Motor neuron (in vitro differentiated cells): ENCODE measurements at regions of chr5 and their contacts with region 1.

Region 1: DNA sequence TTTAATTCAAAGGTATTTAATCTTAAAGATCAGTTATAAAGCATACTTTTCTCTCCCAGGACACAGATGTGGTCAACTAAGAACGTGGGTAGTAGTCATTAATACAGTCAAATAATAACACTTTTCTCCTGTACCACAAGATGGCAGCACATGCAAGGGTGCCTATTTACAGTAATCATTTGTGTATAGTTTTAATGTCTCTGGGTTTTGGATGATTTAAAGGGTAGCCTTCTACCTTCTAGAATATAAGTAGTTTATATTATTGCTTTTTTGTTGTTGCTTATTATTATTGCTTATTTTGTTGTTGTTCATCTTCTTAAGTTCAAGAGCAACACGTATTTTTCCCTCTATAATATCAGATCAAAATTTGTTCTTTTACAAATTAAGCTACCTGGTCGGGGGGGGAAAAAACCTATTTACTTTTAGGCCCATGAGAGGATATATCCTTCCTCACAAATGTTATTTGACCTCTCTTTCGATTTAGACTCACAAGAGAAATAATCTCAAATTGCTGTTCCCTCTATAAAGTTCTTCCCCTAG is 59.6 kb upstream of the SLC27A6 start:
- ATAC-seq: peak; percentile 53 to 91 (median 71)
- H3K4me3 ChIP-seq: no peak overlapping the region
- H3K27ac ChIP-seq: no peak overlapping the region
- H3K4me1 ChIP-seq: no peaks in the 10 kb centered on the region

Region 2: GRCh38 chr5:129053438-129053837 is 147.8 kb after region 1 on chr5:
- in situ Hi-C with region 1: loop called in 1 of 9 experiments (anchors 10 kb)
- ATAC-seq: no peak
- H3K4me3 ChIP-seq: no peak overlapping the region
- H3K27ac ChIP-seq: no peak overlapping the region
- H3K4me1 ChIP-seq: peaks cover 5 to 17% of the 10 kb centered on the region in 2 donors

Region 3: GRCh38 chr5:129767906-129768380 is 862.3 kb after region 1 on chr5:
- in situ Hi-C with region 1: loop called in 1 of 9 experiments (anchors 25 kb)
- ATAC-seq: peak; percentile 91 to 98 (median 95)
- H3K4me3 ChIP-seq: no peak overlapping the region
- H3K27ac ChIP-seq: no peak overlapping the region
- H3K4me1 ChIP-seq: no peaks in the 10 kb centered on the region

Region 4: DNA sequence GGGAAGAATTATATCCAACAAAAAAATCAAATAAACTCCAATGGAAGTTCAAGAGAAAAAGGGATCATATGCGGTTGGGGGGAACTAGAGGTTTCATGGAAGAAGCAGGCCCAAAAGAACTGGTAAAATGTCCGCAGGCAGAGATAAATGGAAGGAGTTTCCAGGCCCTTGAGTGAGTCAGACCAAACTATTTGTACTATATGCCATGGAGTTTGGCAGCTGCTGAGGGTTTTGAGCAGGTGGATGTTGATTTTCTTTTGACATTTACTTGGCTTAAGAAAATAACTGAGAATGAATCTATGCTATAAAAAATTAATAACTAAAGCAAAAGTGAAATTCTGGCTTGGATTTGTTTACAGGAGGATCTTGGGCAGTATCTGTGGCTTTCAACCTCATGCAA is 876.0 kb after region 1 on chr5:
- in situ Hi-C with region 1: loop called in 1 of 9 experiments (anchors 25 kb)
- ATAC-seq: no peak
- H3K4me3 ChIP-seq: no peak overlapping the region
- H3K27ac ChIP-seq: no peak overlapping the region
- H3K4me1 ChIP-seq: no peaks in the 10 kb centered on the region